Motor neuron (in vitro differentiated cells): ENCODE measurements at regions of chr2 and their contacts with region 1.

Region 1: GRCh38 chr2:230999477-230999876 is 3.6 kb downstream of the SPATA3 start:
- ATAC-seq: no peak
- H3K4me3 ChIP-seq: no peak overlapping the region
- H3K27ac ChIP-seq: no peak overlapping the region
- H3K4me1 ChIP-seq: no peaks in the 10 kb centered on the region

Region 2: DNA sequence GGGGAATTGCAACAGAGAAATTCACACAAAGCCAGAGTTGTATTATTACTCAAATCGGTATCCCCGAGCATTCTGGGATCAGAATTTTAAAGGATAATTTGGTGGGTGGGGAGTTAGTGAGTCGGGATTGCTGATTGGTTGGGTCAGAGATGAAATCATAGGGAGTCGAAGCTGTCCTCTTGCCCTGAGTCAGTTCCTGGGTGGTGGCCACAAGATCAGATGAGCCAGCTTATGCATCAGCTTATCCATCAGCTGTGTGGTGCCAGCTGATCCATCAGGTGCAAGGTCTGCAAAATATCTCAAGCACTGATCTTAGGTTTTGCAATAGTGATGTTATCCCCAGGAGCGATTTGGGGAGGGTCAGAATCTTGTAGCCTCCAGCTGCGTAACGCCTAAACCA is 169.0 kb before region 1 on chr2:
- in situ Hi-C with region 1: loop called in 2 of 9 experiments (anchors 10 to 25 kb)
- ATAC-seq: peak in 3 of 8 experiments; percentile 24 to 39 (median 29)
- H3K4me3 ChIP-seq: no peak overlapping the region
- H3K27ac ChIP-seq: no peak overlapping the region
- H3K4me1 ChIP-seq: no peaks in the 10 kb centered on the region